Right ventricle myocardium superior (tissue), 1 donor: ENCODE measurements at regions of chr2 and their contacts with region 1.

Region 1: GRCh38 chr2:176638167-176639015 is 369.1 kb downstream of the MTX2 start:
- DNase-seq: peak; percentile 76
- ATAC-seq: peak; percentile 98

Region 2: DNA sequence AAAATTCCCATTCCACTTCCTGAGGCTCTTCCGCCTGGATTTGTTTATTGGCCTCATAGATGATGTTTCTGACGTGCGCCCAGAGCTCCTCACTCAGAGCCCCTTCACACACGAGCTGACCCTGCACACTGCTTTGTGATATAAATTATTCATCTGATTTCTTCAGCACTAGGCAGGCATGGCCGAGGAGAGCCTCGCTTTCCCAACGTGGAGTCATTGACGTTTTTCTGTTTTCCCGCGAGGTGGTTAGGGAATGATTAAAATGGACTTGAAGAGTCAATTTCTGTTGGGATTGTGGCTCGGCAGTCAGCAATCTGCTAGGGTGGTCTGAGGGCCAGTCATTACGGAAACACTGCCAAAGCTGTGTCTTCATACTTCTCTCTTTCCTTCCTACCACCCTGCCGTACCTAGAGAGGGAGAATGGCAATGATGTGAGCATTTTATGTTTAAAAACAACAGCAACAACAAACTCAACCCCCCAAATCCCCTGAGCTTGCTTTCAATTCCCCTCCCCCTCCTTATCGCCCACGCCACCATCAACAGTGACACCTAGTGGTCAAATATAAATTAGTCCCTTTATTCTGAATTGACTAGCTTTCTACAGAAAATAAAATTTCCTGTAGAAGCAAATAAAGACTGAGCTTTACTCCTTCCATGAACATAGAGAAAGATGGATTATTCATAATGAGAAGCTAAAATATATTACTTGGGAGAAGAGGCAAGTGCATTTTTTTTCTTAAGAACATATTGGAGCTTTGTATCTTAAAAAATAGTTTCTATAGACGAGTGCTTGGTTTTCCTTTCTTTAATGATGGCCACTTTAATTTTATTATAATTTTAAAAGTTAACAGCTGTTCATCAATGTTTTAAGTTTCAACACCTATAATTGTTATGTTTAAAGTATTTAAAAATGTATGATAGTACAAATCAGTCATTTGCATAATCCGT is 84.0 kb before region 1 on chr2:
- intact Hi-C with region 1: loop called (anchors 5 kb)
- DNase-seq: peak; percentile 40
- ATAC-seq: peak; percentile 86